CD4-positive, alpha-beta T cell (primary cell): ENCODE measurements at regions of chr14 and their contacts with region 1.

Region 1: GRCh38 chr14:61362075-61362750 is 40.8 kb downstream of the PRKCH start:
- DNase-seq: no peak
- ATAC-seq: no peak
- H3K4me3 ChIP-seq: no peak overlapping the region
- H3K4me3 Mint-ChIP-seq: no peak overlapping the region
- H3K27ac ChIP-seq: peak overlapping the region in 1 of 2 donors; percentile 10
- H3K27ac Mint-ChIP-seq: no peak overlapping the region
- H3K4me1 ChIP-seq: peaks cover 76% of the 10 kb centered on the region
- H3K4me1 Mint-ChIP-seq: peaks cover 42% of the 10 kb centered on the region
- H3K27me3 ChIP-seq: no peaks in the 10 kb centered on the region
- H3K27me3 Mint-ChIP-seq: no peaks in the 10 kb centered on the region
- CTCF ChIP-seq: no peak

Region 2: DNA sequence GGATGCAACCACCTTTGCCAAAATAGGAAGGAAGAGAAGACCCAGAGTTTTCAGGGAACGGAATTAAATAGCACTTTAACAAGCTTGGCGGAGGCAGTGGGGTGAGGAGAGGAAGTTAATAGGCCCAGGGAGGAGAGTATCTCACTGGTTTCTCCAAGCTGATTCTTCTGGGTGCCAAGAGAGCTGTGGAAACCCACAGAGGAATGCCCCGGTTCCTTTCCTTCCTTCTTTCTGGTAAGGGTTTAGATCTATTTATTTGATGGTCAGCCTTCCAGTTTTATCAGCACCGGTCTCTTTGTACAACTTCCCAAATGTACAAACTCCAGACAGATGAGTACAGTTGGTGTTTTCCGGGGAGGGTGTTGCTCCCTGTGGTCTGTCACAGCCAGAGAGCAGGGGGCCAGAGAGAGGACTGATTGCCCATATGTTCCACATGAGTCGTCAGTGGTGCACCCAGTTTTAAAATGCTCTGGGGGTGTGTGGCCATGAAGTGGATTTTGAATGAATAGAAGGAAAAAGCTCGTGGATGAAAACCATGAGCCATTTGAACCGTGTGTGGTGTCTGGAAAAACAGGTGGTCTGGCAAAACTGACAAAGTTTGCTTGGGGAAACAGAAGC is 14.3 kb before region 1 on chr14:
- CTCF ChIA-PET with region 1: interaction called, 5 read pairs
- POLR2A ChIA-PET with region 1: interaction called, 18 read pairs
- intact Hi-C with region 1: loop called (anchors 2 kb)
- DNase-seq: peak in 2 of 14 experiments; percentile 45 to 52
- ATAC-seq: no peak
- H3K4me3 ChIP-seq: peak overlapping the region; percentile 44
- H3K4me3 Mint-ChIP-seq: peak overlapping the region; percentile 83
- H3K27ac ChIP-seq: peak overlapping the region; percentile 67 to 88
- H3K27ac Mint-ChIP-seq: peak overlapping the region; percentile 99
- H3K4me1 ChIP-seq: peaks cover 87% of the 10 kb centered on the region
- H3K4me1 Mint-ChIP-seq: peaks cover 97% of the 10 kb centered on the region
- H3K27me3 ChIP-seq: no peaks in the 10 kb centered on the region
- H3K27me3 Mint-ChIP-seq: no peaks in the 10 kb centered on the region
- CTCF ChIP-seq: no peak

Region 3: GRCh38 chr14:61475316-61475715 is 113.1 kb after region 1 on chr14:
- CTCF ChIA-PET with region 1: no interaction called
- POLR2A ChIA-PET with region 1: no interaction called
- intact Hi-C with region 1: no loop called
- DNase-seq: peak in 3 of 14 experiments; percentile 71 to 80 (median 76)
- ATAC-seq: no peak
- H3K4me3 ChIP-seq: no peak overlapping the region
- H3K4me3 Mint-ChIP-seq: peak overlapping the region; percentile 5
- H3K27ac ChIP-seq: peak overlapping the region; percentile 95 to 97
- H3K27ac Mint-ChIP-seq: peak overlapping the region; percentile 84
- H3K4me1 ChIP-seq: peaks cover 86% of the 10 kb centered on the region
- H3K4me1 Mint-ChIP-seq: peaks cover 96% of the 10 kb centered on the region
- H3K27me3 ChIP-seq: no peaks in the 10 kb centered on the region
- H3K27me3 Mint-ChIP-seq: no peaks in the 10 kb centered on the region
- CTCF ChIP-seq: peak; percentile 71